ENCODE measurements at regions of chr21 and their contacts with region 1.

Region 1: DNA sequence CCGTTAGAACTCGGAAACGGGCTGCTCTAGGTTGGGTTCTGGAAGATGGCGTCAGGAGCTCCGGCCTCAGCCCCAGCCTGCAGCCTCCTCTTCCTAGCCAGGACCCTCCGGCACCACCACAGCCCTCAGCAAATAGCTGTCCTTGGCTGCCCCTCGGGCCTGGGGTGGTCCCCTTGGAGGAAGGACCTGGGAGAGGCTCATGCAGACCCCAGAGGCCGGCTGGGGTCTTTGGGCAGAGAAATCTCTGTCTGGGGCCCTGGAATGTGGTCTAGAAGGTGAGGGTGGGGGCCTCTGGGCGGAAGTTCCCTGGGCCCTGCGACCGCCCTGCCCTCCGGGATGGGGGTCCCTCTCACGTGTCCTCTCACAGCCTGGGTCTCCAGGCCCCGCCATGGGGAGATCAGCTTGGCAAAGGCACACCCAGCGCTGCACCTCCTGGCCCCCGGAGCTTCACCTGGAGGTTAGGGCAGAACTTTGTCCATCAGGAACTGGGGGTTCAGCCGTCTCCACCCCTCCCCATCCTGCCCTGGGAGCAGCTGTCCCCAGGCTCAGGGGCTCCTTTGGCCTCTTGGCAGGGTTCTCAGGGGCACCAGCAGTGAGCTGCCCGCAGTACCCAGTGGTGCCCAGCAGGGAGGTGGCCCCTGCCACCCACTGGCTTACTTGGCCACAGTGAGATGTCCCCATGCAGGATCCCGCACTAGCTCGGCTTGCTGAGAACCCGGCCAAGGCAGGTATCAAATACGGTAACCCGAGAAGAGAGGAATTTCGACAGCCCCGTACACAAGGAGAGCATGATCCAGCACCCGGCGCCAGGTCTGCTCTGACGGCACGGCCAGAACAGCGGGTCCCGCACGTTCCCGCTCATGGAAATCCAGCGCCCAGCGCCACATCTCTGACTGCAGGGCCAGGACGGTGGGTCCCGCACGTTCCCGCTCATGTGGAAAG is 36.6 kb downstream of the RRP1 start:
- DNase-seq: no peak
- ATAC-seq: peak; percentile 48

Region 2: DNA sequence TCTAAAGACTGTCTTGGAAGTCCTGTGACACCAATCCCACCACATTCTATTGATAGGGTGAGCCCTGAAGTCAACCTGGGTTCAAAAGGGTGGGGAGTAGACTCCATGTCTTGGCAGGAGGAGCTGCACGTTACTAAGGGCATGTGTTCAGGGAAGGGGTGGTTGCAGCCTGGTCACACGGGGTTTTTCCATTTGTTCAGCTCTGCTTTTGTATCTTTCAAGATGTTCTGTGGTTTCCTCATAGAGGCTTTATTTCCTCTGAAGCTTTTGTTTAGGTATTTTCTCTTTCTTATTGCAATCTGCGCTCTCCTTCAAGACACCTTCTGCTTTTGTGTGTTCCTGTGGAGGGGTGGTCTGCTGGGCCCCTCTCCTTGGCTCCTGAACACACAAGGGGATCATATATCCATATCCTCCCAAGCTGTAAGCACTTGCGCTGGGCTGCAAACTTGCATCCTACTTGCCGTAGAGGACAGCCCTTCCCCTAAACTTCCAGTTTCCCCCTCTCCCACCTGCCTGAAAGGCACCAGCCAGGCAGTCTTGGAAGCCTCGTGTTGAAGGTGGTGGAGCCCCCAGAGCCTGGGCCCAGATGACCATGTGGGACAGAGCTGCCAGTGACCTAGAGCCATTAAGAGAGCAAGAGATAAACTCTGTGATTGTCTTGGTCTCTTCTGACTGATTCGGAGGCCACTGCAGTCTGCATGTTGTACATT is 123.7 kb after region 1 on chr21:
- intact Hi-C with region 1: loop called (anchors 5 kb)
- DNase-seq: no peak
- ATAC-seq: no peak